ENCODE measurements at regions of chr5 and their contacts with region 1.

Region 1: GRCh38 chr5:141968914-141969608 is at the start of gene RNF14:
- DNase-seq: peak; percentile 96
- H3K4me3 Mint-ChIP-seq: peak within 1 kb of the TSS; percentile 93
- H3K27ac Mint-ChIP-seq: peak within 1 kb of the TSS; percentile 93
- H3K4me1 Mint-ChIP-seq: peaks cover 40% of the 10 kb centered on the region
- H3K27me3 Mint-ChIP-seq: no peaks in the 10 kb centered on the region
- total RNA-seq, gene RNF14: 32.5 to 35.7 TPM

Region 2: GRCh38 chr5:141889282-141889871 is 79.7 kb before region 1 on chr5:
- CTCF ChIA-PET with region 1: interaction called, 10 read pairs
- POLR2A ChIA-PET with region 1: no interaction called
- DNase-seq: no peak
- H3K4me3 Mint-ChIP-seq: no peak overlapping the region
- H3K27ac Mint-ChIP-seq: no peak overlapping the region
- H3K4me1 Mint-ChIP-seq: no peaks in the 10 kb centered on the region
- H3K27me3 Mint-ChIP-seq: peaks cover 38% of the 10 kb centered on the region

Region 3: GRCh38 chr5:141951332-141951781 is 17.7 kb before region 1 on chr5:
- CTCF ChIA-PET with region 1: interaction called, 189 read pairs
- POLR2A ChIA-PET with region 1: interaction called, 47 read pairs
- DNase-seq: peak; percentile 30
- H3K4me3 Mint-ChIP-seq: no peak overlapping the region
- H3K27ac Mint-ChIP-seq: no peak overlapping the region
- H3K4me1 Mint-ChIP-seq: peaks cover 27% of the 10 kb centered on the region
- H3K27me3 Mint-ChIP-seq: no peaks in the 10 kb centered on the region

Region 4: GRCh38 chr5:142012792-142013388 is 43.8 kb after region 1 on chr5 and contains the start of gene GNPDA1:
- CTCF ChIA-PET with region 1: interaction called, 70 read pairs
- POLR2A ChIA-PET with region 1: interaction called, 56 read pairs
- DNase-seq: peak; percentile 77
- H3K4me3 Mint-ChIP-seq: peak within 1 kb of the TSS; percentile 79
- H3K27ac Mint-ChIP-seq: peak within 1 kb of the TSS; percentile 94
- H3K4me1 Mint-ChIP-seq: peaks cover 64% of the 10 kb centered on the region
- H3K27me3 Mint-ChIP-seq: no peaks in the 10 kb centered on the region
- total RNA-seq, gene GNPDA1: 27.1 to 32.1 TPM

Region 5: DNA sequence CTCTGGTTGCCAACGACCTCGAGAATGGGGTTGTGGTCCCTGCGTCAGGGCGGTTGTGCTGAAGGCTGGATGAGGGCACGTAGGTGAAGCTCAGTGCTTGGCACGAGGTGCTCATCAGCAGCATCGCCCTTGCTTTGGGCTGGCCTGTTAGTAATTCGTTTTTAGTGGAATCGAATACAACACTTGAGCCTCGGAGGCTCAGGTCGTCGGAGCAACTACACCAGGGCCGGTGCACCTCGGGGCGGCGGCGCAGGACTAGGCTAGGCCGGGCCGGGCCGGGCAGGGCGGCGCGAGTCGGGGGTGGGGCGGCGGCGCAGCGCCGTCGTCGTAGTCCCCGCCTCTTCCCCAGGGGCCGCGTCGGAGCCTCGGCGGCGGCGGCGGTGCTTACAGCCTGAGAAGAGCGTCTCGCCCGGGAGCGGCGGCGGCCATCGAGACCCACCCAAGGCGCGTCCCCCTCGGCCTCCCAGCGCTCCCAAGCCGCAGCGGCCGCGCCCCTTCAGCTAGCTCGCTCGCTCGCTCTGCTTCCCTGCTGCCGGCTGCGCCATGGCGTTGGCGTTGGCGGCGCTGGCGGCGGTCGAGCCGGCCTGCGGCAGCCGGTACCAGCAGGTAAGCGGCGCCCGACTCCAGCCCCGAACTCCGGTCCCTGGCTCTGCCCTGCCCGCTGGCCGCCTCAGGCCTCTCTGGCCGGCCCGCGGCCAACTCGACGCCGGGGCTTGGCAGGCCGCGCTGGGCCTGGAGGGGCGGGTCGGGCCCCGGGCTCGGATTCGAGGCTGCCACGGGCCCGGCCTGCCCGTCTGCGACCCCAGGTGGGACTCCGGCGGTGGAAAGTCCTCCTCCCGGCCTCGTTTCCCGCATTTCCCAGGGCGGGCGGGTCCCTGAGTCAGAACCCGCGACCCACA is 139.6 kb after region 1 on chr5 and contains the start of gene NDFIP1:
- CTCF ChIA-PET with region 1: interaction called, 15 read pairs
- POLR2A ChIA-PET with region 1: interaction called, 43 read pairs
- DNase-seq: peak; percentile 86
- H3K4me3 Mint-ChIP-seq: peak within 1 kb of the TSS; percentile 94
- H3K27ac Mint-ChIP-seq: peak within 1 kb of the TSS; percentile 90
- H3K4me1 Mint-ChIP-seq: peaks cover 51% of the 10 kb centered on the region
- H3K27me3 Mint-ChIP-seq: no peaks in the 10 kb centered on the region
- total RNA-seq, gene NDFIP1: 57.1 to 59.3 TPM

Measured in activated CD4-positive, alpha-beta memory T cell treated with anti-CD3 and anti-CD28 coated beads, Interleukin-2, amount 10 ng/mL, durations not matched to agents 7 days and 5 days (primary cell).